Head of caudate nucleus (tissue), 42 donors: ENCODE measurements at regions of chr2 and their contacts with region 1.

Region 1: GRCh38 chr2:9205963-9206948 is at the start of gene ASAP2:
- DNase-seq: peak; percentile 19 to 89 (median 74)

Region 2: DNA sequence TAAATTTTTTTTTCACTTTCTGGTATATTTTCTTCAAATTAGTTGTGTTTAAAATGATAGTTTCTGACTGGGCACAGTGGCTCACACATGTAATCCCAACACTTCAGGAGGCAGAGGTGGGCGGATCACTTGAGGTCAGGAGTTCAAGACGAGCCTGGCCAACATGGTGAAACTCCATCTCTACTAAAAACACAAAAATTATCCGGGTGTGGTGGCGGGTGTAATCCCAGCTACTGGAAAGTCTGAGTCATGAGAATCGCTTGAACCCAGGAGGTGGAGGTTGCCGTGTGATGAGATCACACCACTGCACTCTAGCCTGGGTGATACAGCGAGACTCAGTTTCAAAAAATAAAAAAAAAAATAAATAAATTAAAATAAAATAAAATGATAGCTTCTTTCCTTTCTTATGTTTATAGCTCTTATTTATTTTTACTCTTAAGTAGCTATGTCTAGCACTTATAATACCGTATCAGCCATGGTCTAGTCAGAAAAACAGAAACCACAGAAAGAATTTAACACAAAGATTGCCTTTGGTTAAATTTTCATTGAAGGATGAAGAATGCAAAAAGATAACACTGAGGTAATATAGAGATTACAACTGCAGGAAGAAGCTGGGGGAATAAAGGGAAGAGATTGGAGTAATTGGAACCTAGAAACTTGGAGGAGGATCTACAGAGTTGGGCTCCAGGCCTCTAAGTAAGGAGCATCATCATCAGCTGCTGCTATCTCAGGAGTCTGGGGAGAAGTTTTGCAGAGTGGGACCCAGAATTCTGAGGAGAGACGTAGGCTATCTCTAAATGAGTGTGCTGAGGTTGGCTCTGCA is 148.1 kb before region 1 on chr2:
- intact Hi-C with region 1: no loop called
- DNase-seq: no peak

Region 3: GRCh38 chr2:9261231-9261883 is 55.1 kb after region 1 on chr2:
- intact Hi-C with region 1: loop called (anchors 5 kb)
- DNase-seq: peak in 9 of 42 donors; percentile 13 to 67 (median 45)

Region 4: DNA sequence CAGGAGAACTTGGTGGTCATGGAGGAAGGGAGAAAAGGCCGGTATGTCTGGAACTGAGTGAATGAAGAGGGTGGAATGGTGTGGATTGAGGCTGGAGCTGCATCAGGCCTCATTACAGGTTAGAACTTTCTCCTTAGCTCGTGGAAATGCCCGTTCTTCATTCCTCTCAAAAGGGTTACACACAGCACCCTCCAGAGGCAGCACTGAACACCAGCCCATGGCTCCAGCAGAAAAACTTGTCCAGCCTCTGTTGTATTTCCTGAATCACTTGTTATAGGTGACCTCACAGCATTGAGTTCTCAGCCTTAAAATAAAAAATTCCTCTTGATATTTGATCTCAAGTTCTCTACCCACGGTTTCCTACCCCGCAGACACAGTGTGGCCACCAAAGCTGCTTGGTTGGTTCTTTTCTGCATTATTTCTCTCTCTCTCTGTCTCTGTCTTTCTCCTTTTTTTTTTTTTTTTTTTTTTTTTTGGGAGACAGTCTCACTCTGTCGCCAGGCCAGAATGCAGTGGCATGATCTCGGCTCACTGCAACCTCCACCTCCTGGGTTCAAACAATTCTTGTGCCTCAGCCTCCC is 127.4 kb after region 1 on chr2:
- intact Hi-C with region 1: loop called (anchors 10 kb)
- DNase-seq: peak in 40 of 42 donors; percentile 37 to 82 (median 65)

Region 5: DNA sequence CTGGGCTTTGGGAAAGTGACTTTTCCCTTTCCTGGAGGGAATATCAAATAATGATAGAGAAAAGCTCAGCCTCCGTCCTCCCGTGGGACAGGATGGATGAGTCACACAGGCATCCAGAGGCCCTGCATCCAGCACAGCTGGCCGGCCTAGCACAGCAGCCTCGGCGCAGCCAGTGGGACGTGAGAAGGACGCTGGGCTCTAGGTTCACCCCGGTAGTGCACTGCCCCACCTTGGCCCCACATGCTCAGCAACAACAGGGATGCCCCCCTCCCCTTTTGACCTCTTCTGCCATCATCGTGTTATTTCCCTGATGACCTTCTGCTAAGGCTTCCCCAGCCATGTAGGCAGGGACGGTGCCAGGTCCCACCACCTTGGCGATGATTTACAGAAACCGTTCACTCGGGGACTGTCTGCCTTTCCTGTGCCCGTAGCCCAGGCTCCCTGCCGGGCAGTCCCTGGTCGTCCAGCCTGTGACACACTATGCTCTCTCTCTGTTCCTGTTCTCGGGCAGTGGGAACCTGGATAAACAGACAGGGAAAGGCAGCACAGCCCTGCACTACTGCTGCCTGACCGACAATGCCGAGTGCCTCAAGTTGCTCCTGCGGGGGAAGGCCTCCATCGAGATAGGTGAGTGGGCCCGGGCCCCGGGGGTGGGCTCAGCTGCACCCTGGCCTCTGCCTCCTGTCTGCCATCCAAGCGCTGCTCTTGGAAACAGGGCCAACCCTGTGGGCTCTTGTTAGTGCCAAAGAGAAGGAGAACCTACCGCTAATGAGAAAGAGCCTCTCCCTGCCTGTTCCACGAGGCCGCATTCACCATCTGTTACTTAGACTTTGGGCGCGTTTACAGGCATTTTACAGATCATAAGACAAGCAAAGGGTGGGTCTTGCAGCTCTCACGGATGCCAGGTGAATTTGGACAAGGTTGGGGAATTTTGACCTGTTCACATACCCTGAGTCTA is 172.5 kb after region 1 on chr2:
- intact Hi-C with region 1: no loop called
- DNase-seq: peak in 1 of 42 donors; percentile 26

Region 6: DNA sequence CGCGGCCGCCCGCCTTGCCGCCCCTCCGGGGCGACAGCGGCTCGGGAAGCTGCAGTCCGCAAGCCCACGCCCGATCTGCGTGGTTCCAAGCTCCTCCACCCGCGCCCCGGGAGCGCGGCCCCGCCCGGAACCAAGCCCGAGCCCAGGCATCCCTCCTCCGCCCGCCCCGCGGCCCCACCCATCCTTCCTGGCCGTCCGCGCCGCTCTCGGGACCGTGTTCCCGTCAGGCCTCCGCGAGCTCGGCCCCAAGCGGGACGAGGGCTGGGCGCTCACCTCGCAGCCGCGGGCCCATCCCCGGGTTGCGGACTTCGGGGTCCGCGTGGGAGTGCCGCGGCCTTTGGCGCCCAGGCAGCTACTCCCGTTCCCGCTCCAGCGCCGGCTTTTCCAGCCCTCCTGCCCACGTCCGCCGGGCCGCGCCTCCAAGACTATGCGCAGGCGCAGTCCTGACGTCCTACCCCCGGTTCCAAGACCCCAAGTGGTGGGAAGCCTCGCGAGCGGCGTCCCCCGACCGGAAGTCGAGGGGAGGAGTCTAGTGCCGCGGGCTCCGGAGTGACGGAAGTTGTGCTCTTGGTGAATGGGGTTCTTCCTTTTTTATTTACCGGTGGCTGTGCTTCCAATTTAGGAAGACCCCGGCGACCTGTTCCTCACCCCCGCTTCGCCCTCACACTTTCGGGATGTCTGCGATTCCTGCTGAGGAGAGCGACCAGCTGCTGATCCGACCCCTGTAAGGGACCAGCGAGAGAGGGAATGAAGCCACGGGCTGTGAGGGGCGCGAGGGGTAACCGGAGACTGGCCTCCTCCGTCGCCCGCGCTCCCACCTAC is 217.1 kb after region 1 on chr2 and contains the starts of genes CPSF3 and ITGB1BP1:
- intact Hi-C with region 1: loop called (anchors 5 kb)
- DNase-seq: peak; percentile 88 to 99 (median 98)

Region 7: GRCh38 chr2:9555297-9556141 is 349.3 kb after region 1 on chr2 and contains the start of gene ADAM17:
- intact Hi-C with region 1: loop called (anchors 5 kb)
- DNase-seq: peak; percentile 78 to 95 (median 91)